Spleen (tissue), 13 donors: ENCODE measurements at regions of chr14 and their contacts with region 1.

Region 1: DNA sequence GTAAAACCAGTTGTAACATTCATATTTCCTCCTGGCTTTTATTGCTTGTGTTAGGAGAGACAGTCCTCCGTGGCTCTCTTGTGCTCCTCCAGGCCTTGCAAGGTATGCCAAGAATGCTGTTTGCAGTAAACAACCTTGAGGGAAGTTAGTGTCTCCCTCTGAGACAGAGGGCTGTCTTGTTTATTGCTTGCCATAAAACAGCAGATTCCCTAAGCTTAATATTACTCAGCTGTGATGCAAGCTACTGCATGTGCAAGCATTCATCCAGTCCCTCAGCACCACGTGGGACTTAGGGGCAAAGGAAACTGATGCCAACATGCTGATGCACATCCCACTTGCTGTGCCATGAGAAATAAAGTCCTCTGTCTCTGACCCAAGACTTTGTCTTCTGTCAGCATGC is 6.6 kb downstream of the POMT2 start:
- DNase-seq: no peak
- H3K4me3 ChIP-seq: no peak overlapping the region
- H3K27ac ChIP-seq: no peak overlapping the region
- H3K4me1 ChIP-seq: peaks cover 0 to 18% (median 2%) of the 10 kb centered on the region in 6 donors
- H3K27me3 ChIP-seq: no peaks in the 10 kb centered on the region
- CTCF ChIP-seq: no peak
- POLR2A ChIP-seq: no peak

Region 2: GRCh38 chr14:76876076-76876475 is 438.0 kb before region 1 on chr14:
- intact Hi-C with region 1: loop called (anchors 10 kb)
- DNase-seq: no peak
- H3K4me3 ChIP-seq: no peak overlapping the region
- H3K27ac ChIP-seq: no peak overlapping the region
- H3K4me1 ChIP-seq: peaks cover 0 to 9% (median 0%) of the 10 kb centered on the region in 6 donors
- H3K27me3 ChIP-seq: no peaks in the 10 kb centered on the region
- CTCF ChIP-seq: peak; percentile 88 to 95 (median 91)
- POLR2A ChIP-seq: no peak

Region 3: GRCh38 chr14:77151918-77152588 is 162.0 kb before region 1 on chr14:
- intact Hi-C with region 1: loop called (anchors 5 kb)
- DNase-seq: peak; percentile 7
- H3K4me3 ChIP-seq: no peak overlapping the region
- H3K27ac ChIP-seq: no peak overlapping the region
- H3K4me1 ChIP-seq: no peaks in the 10 kb centered on the region
- H3K27me3 ChIP-seq: peaks cover 0 to 80% (median 3%) of the 10 kb centered on the region in 7 donors
- CTCF ChIP-seq: peak in 3 of 11 experiments; percentile 9 to 15 (median 15)
- POLR2A ChIP-seq: no peak